H1 (cell line): ENCODE measurements at regions of chr11 and their contacts with region 1.

Region 1: DNA sequence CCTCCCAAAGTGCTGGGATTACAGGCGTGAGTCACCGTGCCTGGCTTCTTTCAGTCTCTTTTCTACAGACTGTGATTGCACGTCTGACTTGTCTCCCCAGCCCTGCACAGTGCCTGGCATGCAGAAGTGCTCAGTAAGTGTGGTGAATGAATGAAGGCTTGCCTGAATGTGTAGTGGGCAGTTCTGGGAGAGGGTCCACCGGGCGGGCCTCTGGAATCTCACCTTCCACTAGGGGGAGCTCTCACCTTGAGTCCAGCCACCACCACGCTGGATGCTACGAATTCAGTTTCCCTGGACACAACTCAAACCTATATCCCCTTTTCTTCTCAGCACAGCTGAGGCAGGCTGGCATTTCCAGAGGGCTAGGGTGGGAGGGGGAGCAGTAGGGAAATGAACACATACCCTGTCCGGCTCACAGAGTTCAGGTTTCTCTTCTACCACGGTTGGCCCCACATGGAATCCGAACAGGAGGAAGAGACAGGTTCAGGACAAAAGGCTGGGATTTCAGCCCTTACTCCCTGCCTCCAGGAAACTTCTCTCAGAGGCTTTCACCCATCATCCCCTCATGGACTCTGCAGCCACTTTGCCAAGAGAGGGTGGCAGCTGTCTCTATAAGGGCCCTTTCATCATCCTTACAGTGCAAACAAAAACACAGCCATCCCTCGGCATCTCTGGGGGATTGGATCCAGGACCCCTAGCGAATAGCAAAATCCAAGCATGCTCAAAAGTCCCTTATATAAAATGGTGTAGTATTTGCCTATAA is 86.8 kb downstream of the NECTIN1 start:
- DNase-seq: no peak
- H3K4me3 ChIP-seq: no peak overlapping the region
- H3K27ac ChIP-seq: no peak overlapping the region
- H3K4me1 ChIP-seq: peaks cover 0 to 4% (median 0%) of the 10 kb centered on the region in 4 experiments; a peak in 2 of 7 replicates
- H3K27me3 ChIP-seq: no peaks in the 10 kb centered on the region; a peak in 1 of 7 replicates
- CTCF ChIP-seq: peak; percentile 73 to 83 (median 75)
- EP300 ChIP-seq: no peak
- POLR2A ChIP-seq: no peak
- RAD21 ChIP-seq: peak; percentile 68 to 82

Region 2: GRCh38 chr11:119584193-119585037 is 57.7 kb before region 1 on chr11:
- CTCF ChIA-PET with region 1: interaction called, 10 read pairs
- POLR2A ChIA-PET with region 1: no interaction called
- DNase-seq: peak; percentile 70 to 79
- H3K4me3 ChIP-seq: peak overlapping the region; percentile 59 to 69 (median 64)
- H3K27ac ChIP-seq: no peak overlapping the region
- H3K4me1 ChIP-seq: peaks cover 0 to 13% (median 7%) of the 10 kb centered on the region in 4 experiments; a peak in 6 of 7 replicates
- H3K27me3 ChIP-seq: peaks cover 0 to 18% (median 7%) of the 10 kb centered on the region in 4 experiments; a peak in 4 of 7 replicates
- CTCF ChIP-seq: no peak
- EP300 ChIP-seq: peak in 1 of 2 experiments; percentile 47; a peak in 1 of 3 replicates
- POLR2A ChIP-seq: peak in 1 of 2 experiments; percentile 76; a peak in 2 of 3 replicates
- RAD21 ChIP-seq: no peak

Region 3: GRCh38 chr11:119615003-119615881 is 26.9 kb before region 1 on chr11:
- CTCF ChIA-PET with region 1: interaction called, 245 read pairs
- POLR2A ChIA-PET with region 1: no interaction called
- DNase-seq: no peak
- H3K4me3 ChIP-seq: no peak overlapping the region
- H3K27ac ChIP-seq: no peak overlapping the region
- H3K4me1 ChIP-seq: peaks cover 4 to 14% (median 9%) of the 10 kb centered on the region in 4 experiments; a peak in 6 of 7 replicates
- H3K27me3 ChIP-seq: peaks cover 0 to 2% (median 0%) of the 10 kb centered on the region in 4 experiments; a peak in 2 of 7 replicates
- CTCF ChIP-seq: no peak
- EP300 ChIP-seq: no peak
- POLR2A ChIP-seq: no peak
- RAD21 ChIP-seq: no peak

Region 4: DNA sequence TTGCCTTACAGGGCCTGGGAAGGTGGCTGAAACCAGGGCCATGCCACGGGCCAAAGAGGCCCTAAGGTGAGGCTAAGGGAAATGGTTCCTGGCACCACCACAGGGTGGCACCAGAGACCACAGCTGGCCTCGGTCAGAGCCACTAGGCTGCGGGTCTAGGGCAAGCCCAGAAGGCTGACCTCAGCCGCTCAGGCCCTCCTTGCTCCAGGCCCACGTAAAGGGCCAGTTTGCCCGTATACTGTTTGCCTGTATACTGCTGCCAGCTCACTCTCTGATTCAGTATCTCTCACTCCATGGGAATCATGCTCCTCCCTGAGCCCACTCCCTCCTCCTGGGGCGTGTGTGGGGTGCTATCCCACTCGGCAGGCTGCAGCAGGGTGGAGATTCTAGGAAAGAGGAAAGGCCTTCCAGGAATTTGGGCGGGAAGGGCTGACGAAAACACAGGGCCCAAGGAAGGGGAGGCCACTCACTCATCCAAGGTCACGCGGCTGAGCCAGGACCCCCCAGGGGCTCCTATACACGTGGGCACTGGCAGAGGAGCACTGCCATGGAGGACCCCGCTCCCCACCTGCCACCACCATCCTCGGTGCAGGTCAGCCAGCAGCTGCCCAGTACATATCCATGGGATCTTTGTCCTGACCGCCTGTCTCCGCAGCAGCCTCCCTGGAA is 24.4 kb after region 1 on chr11:
- CTCF ChIA-PET with region 1: interaction called, 11 read pairs
- POLR2A ChIA-PET with region 1: interaction called, 5 read pairs
- DNase-seq: peak; percentile 69 to 92
- H3K4me3 ChIP-seq: no peak overlapping the region
- H3K27ac ChIP-seq: no peak overlapping the region
- H3K4me1 ChIP-seq: peaks cover 2 to 19% (median 15%) of the 10 kb centered on the region in 4 experiments; a peak in 6 of 7 replicates
- H3K27me3 ChIP-seq: no peaks in the 10 kb centered on the region
- CTCF ChIP-seq: peak; percentile 92 to 99 (median 96)
- EP300 ChIP-seq: no peak
- POLR2A ChIP-seq: no peak
- RAD21 ChIP-seq: peak; percentile 99